ENCODE measurements at regions of chr2 and their contacts with region 1.

Region 1: GRCh38 chr2:170928824-170929685 is at the start of gene GORASP2:
- DNase-seq: peak; percentile 99
- ATAC-seq: peak; percentile 91
- H3K4me3 ChIP-seq: peak within 1 kb of the TSS; percentile 93
- H3K27ac ChIP-seq: peak within 1 kb of the TSS; percentile 57
- H3K4me1 ChIP-seq: peaks cover 26% of the 10 kb centered on the region
- H3K27me3 ChIP-seq: no peaks in the 10 kb centered on the region
- CTCF ChIP-seq: peak; percentile 89
- total RNA-seq, gene GORASP2: 44.5 and 67.3 TPM in 2 replicates

Region 2: GRCh38 chr2:170873035-170873692 is 55.9 kb before region 1 on chr2:
- CTCF ChIA-PET with region 1: interaction called, 4 read pairs
- POLR2A ChIA-PET with region 1: no interaction called
- intact Hi-C with region 1: loop called (anchors 2 kb)
- DNase-seq: peak; percentile 84
- ATAC-seq: peak; percentile 86
- H3K4me3 ChIP-seq: peak overlapping the region; percentile 49; the same call in 1 of the 2 replicates
- H3K27ac ChIP-seq: no peak overlapping the region
- H3K4me1 ChIP-seq: peaks cover 11% of the 10 kb centered on the region
- H3K27me3 ChIP-seq: no peaks in the 10 kb centered on the region
- CTCF ChIP-seq: peak; percentile 94

Region 3: DNA sequence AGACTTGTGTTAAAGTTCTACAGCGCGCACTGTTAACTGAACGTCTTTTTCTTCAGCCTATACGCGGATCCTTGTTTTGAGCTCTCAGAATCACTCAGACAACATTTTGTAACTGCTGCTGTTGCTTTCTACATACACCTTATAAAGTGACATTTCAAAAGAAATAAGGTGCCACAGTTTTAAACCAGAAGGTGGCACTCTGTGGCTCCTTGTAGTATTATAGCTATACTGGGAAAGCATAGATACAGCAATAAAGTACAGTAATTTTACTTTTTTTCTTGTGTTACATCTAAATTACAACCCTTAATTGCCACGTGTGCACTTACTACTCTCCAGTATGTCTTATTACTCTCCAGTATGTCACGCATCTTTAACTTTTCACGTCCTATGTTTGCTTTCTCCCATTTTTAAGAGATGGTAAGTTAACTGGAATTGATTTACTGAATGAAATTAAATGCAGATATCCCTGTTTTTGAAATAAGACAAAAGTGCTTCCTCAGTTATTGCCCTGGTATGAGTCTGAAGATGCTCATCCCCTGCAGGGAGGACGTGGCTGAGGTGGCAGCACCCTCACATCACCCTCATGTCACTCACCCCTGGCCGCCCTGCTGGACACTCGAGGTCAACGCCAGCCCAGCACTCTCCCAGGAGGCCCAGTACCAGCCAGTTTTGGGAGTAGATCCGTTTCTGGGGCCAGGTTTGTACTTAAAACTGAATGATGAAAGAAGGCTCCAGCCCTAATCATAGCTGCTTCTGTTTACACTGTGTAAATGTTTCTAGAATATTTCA is 37.8 kb after region 1 on chr2:
- CTCF ChIA-PET with region 1: interaction called, 11 read pairs
- POLR2A ChIA-PET with region 1: no interaction called
- intact Hi-C with region 1: no loop called
- DNase-seq: peak; percentile 30
- ATAC-seq: peak; percentile 60
- H3K4me3 ChIP-seq: no peak overlapping the region
- H3K27ac ChIP-seq: no peak overlapping the region
- H3K4me1 ChIP-seq: no peaks in the 10 kb centered on the region
- H3K27me3 ChIP-seq: no peaks in the 10 kb centered on the region
- CTCF ChIP-seq: peak; percentile 40

Region 4: GRCh38 chr2:172234716-172235691 is 1305.9 kb after region 1 on chr2:
- CTCF ChIA-PET with region 1: interaction called, 10 read pairs
- POLR2A ChIA-PET with region 1: no interaction called
- intact Hi-C with region 1: no loop called
- DNase-seq: no peak
- ATAC-seq: no peak
- H3K4me3 ChIP-seq: peak overlapping the region; percentile 60
- H3K27ac ChIP-seq: no peak overlapping the region
- H3K4me1 ChIP-seq: peaks cover 35% of the 10 kb centered on the region
- H3K27me3 ChIP-seq: no peaks in the 10 kb centered on the region
- CTCF ChIP-seq: no peak